ENCODE measurements at regions of chr17 and their contacts with region 1.

Region 1: DNA sequence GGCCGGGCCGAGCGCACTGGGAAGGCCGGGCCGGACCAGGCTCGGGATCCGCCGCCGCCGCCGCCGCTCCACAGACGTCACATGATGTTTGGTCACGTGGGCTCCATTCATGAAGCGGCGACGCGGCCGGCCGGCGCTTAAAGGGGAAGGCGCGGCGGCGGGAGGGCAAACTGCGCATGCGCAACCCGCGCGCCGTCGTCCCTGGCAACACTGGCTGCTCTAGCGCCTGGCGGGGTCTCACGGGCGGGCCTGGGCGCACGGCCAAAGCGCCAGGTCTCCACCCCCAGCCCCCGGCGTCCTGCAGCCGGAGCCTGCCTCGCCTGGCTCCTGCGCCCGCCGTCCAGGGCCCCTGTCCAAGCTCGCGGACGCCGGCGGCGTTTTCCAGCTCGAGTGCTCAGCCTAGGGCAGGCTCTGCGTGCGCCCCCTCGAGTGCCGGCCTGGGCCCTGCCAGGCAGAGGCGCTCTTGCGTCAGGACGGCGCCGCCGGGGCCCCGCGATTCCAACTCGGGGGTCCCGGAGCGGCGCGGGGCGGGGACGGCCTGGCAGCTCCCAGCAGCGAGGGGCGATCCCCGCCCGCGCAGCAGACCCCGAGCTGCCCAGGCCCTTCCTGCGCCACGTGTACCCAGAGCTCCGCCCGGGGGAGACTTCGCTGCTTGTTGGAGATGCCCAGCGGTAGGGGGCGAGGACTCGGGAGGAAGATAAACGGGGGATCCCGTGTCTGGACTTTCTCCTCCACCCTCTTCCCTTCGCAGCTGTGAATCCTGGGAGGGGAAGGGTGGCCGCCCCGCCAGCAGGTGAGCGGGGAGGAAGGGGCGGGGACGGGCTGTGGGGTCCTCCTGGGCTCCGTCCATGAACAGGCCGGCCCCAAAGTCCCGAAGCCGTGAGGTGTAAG is at the start of gene MAFG:
- DNase-seq: peak; percentile 97
- ATAC-seq: peak; percentile 71
- H3K4me3 ChIP-seq: peak within 1 kb of the TSS; percentile 40 to 78 (median 65)
- H3K4me3 Mint-ChIP-seq: peak within 1 kb of the TSS; percentile 87
- H3K27ac ChIP-seq: peak within 1 kb of the TSS; percentile 26 to 85
- H3K27ac Mint-ChIP-seq: peak within 1 kb of the TSS; percentile 86
- H3K4me1 ChIP-seq: peaks cover 26 to 35% of the 10 kb centered on the region in 2 donors
- H3K4me1 Mint-ChIP-seq: peaks cover 22% of the 10 kb centered on the region
- H3K27me3 ChIP-seq: peaks cover 0 to 23% (median 9%) of the 10 kb centered on the region in 4 experiments
- H3K27me3 Mint-ChIP-seq: peaks cover 10% of the 10 kb centered on the region
- CTCF ChIP-seq: peak; percentile 52
- total RNA-seq, gene MAFG: 27.9 and 29.0 TPM in 2 replicates

Region 2: DNA sequence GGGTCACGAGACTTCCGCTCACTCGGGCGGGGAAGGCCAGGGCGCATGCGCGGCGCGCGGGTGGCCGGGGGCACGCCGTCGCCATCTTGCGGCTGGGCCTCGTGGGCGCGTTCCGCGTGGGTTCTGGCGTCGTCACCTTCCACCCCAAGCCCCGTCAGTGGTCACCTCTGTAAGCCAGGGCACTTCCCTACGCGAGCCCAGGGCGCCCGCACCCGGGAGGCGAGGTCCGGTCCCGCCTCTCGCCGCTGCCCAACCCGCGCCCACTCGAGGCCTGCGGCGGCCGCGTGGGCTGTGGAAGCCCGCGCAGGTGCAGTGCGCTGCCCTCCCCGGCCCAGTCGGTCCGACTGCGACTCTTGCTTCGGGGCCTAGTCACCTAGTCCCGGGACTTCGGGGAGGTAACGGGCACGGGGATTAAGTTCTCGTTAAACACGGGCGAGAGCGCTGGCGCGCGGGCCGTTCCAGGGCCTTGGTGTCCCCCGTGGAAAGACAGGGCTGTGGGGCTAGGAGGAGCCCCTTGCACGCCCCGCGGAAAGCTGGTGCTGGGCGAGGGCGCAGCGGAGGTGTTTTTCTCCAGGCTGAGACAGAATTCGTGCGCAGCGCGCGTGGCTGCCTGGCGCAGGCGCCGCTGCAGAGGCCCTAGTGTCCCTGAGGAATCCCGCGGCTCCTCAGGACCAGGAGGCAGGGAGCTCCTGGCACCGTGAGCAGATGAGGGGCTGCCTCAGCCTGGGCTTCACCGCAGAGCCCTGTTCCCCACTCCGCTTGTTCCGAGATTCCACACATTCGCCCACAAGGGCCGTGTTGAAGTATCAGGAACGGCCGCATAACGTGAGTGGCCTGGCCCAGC is 56.3 kb before region 1 on chr17:
- CTCF ChIA-PET with region 1: no interaction called
- POLR2A ChIA-PET with region 1: interaction called, 3 read pairs
- intact Hi-C with region 1: loop called (anchors 2 kb)
- DNase-seq: peak; percentile 96
- ATAC-seq: peak; percentile 2
- H3K4me3 ChIP-seq: peak overlapping the region; percentile 27 to 90 (median 84)
- H3K4me3 Mint-ChIP-seq: peak overlapping the region; percentile 89
- H3K27ac ChIP-seq: peak overlapping the region; percentile 90 to 99
- H3K27ac Mint-ChIP-seq: peak overlapping the region; percentile 98
- H3K4me1 ChIP-seq: peaks cover 22 to 39% of the 10 kb centered on the region in 2 donors
- H3K4me1 Mint-ChIP-seq: peaks cover 32% of the 10 kb centered on the region
- H3K27me3 ChIP-seq: no peaks in the 10 kb centered on the region
- H3K27me3 Mint-ChIP-seq: no peaks in the 10 kb centered on the region
- CTCF ChIP-seq: peak; percentile 50

Region 3: DNA sequence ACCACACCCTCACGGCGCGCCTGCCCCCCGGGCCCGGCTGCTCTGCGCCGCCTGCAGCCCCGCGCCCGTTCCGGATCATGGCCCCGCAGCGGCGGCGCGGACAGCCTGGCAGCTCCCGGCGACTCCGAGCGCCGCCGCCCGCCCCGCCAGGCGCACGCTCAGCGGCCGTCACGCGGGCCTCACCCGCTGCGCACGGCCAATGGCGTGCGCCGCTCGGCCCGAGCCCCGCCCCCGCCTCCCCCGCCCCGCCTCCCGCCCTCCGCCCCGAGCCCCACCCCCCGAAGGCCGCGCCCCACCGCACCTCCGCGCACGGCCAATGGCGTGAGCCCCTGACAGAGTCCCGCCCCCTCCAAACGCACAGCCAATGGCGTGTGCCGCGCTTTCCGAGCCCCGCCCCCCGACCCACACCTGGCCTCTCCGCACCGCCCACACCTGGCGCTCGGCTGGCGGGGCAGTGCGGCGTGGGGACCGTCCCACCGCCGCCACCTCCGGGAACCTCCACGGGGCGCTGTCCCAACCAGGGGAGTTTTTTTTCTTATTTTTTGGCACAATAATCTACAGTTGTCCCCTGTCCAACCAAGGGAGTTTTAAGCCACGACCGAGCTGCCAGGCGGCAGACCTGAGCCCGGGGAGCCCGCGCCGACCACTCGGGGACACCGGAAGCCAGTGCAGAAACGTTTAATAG is 16.5 kb before region 1 on chr17 and contains the start of gene PCYT2:
- CTCF ChIA-PET with region 1: interaction called, 8 read pairs
- POLR2A ChIA-PET with region 1: no interaction called
- intact Hi-C with region 1: loop called (anchors 2 kb)
- DNase-seq: peak; percentile 94
- ATAC-seq: peak; percentile 95
- H3K4me3 ChIP-seq: peak within 1 kb of the TSS; percentile 43 to 75 (median 65)
- H3K4me3 Mint-ChIP-seq: peak within 1 kb of the TSS; percentile 86
- H3K27ac ChIP-seq: peak within 1 kb of the TSS in 1 of 2 donors; percentile 59
- H3K27ac Mint-ChIP-seq: peak within 1 kb of the TSS; percentile 63
- H3K4me1 ChIP-seq: peaks cover 10 to 19% of the 10 kb centered on the region in 2 donors
- H3K4me1 Mint-ChIP-seq: peaks cover 15% of the 10 kb centered on the region
- H3K27me3 ChIP-seq: no peaks in the 10 kb centered on the region
- H3K27me3 Mint-ChIP-seq: no peaks in the 10 kb centered on the region
- CTCF ChIP-seq: no peak
- total RNA-seq, gene PCYT2: 34.2 and 34.9 TPM in 2 replicates

Region 4: GRCh38 chr17:81941790-81942553 is 14.1 kb after region 1 on chr17:
- CTCF ChIA-PET with region 1: interaction called, 3 read pairs
- POLR2A ChIA-PET with region 1: no interaction called
- intact Hi-C with region 1: loop called (anchors 1 kb)
- DNase-seq: no peak
- ATAC-seq: no peak
- H3K4me3 ChIP-seq: no peak overlapping the region
- H3K4me3 Mint-ChIP-seq: no peak overlapping the region
- H3K27ac ChIP-seq: no peak overlapping the region
- H3K27ac Mint-ChIP-seq: no peak overlapping the region
- H3K4me1 ChIP-seq: peaks cover 5 to 12% of the 10 kb centered on the region in 2 donors
- H3K4me1 Mint-ChIP-seq: peaks cover 4% of the 10 kb centered on the region
- H3K27me3 ChIP-seq: peaks cover 0 to 19% (median 2%) of the 10 kb centered on the region in 4 experiments
- H3K27me3 Mint-ChIP-seq: peaks cover 5% of the 10 kb centered on the region
- CTCF ChIP-seq: no peak

Region 5: DNA sequence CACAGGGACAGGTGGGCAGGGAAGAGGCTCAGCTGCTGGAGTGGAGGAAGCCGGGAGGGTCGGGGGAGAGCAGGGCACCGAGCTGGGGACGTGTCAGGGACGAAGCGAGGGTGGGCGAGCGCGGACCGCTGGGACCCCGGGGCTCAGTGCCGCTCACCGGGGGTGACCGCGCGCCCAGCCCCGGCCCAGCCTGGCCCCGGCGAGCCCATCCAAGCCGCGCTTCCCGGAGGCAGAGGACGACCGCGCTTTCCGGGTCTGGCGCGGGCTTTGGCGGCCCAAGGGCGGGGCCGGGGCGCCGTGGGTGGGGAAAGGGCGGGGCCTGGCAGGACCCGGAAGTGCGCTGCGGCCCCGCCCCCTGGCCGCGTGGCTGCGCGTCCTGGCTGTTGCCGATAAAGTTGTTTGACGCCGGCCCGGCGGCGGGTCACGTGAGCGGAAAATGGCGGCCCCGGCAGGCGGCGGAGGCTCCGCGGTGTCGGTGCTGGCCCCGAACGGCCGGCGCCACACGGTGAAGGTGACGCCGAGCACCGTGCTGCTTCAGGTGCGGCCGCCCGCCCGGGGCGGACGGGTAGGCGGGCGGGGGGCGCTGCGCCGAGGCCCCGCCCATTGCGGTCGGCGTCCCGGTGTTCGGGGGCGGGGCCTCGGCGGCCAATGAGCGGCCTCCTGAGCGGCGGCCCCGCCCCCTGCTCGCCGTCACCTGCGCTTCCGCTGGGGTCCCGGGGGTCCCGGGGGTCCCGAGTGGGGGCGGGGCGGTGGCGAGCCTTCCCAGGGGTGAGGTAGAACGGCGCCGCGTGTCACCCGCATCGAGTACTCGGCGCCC is 49.5 kb after region 1 on chr17 and contains the start of gene ASPSCR1:
- CTCF ChIA-PET with region 1: no interaction called
- POLR2A ChIA-PET with region 1: interaction called, 3 read pairs
- intact Hi-C with region 1: loop called (anchors 2 kb)
- DNase-seq: peak; percentile 96
- ATAC-seq: peak; percentile 92
- H3K4me3 ChIP-seq: peak within 1 kb of the TSS; percentile 38 to 96 (median 79)
- H3K4me3 Mint-ChIP-seq: peak within 1 kb of the TSS; percentile 98
- H3K27ac ChIP-seq: peak within 1 kb of the TSS; percentile 63 to 91
- H3K27ac Mint-ChIP-seq: peak within 1 kb of the TSS; percentile 99
- H3K4me1 ChIP-seq: peaks cover 19 to 26% of the 10 kb centered on the region in 2 donors
- H3K4me1 Mint-ChIP-seq: peaks cover 29% of the 10 kb centered on the region
- H3K27me3 ChIP-seq: no peaks in the 10 kb centered on the region
- H3K27me3 Mint-ChIP-seq: peaks cover 3% of the 10 kb centered on the region
- CTCF ChIP-seq: no peak
- total RNA-seq, gene ASPSCR1: 46.7 and 50.4 TPM in 2 replicates

Region 6: GRCh38 chr17:82170412-82170961 is 242.6 kb after region 1 on chr17:
- CTCF ChIA-PET with region 1: no interaction called
- POLR2A ChIA-PET with region 1: no interaction called
- intact Hi-C with region 1: no loop called
- DNase-seq: no peak
- ATAC-seq: no peak
- H3K4me3 ChIP-seq: no peak overlapping the region
- H3K4me3 Mint-ChIP-seq: no peak overlapping the region
- H3K27ac ChIP-seq: no peak overlapping the region
- H3K27ac Mint-ChIP-seq: no peak overlapping the region
- H3K4me1 ChIP-seq: no peaks in the 10 kb centered on the region
- H3K4me1 Mint-ChIP-seq: no peaks in the 10 kb centered on the region
- H3K27me3 ChIP-seq: no peaks in the 10 kb centered on the region
- H3K27me3 Mint-ChIP-seq: no peaks in the 10 kb centered on the region
- CTCF ChIP-seq: no peak